ENCODE measurements at regions of chrX and their contacts with region 1.

Region 1: GRCh38 chrX:119158226-119158625 is 30.6 kb upstream of the KIAA1210 start:
- DNase-seq: no peak
- H3K4me3 ChIP-seq: no peak overlapping the region
- H3K27ac ChIP-seq: no peak overlapping the region
- H3K4me1 ChIP-seq: no peaks in the 10 kb centered on the region
- H3K27me3 ChIP-seq: no peaks in the 10 kb centered on the region
- CTCF ChIP-seq: no peak

Region 2: GRCh38 chrX:119181491-119181890 is 23.3 kb after region 1 on chrX:
- intact Hi-C with region 1: loop called (anchors 2 kb)
- DNase-seq: no peak
- H3K4me3 ChIP-seq: no peak overlapping the region
- H3K27ac ChIP-seq: no peak overlapping the region
- H3K4me1 ChIP-seq: no peaks in the 10 kb centered on the region
- H3K27me3 ChIP-seq: no peaks in the 10 kb centered on the region
- CTCF ChIP-seq: no peak

Region 3: GRCh38 chrX:119589810-119590209 is 431.6 kb after region 1 on chrX:
- intact Hi-C with region 1: no loop called
- DNase-seq: no peak
- H3K4me3 ChIP-seq: no peak overlapping the region
- H3K27ac ChIP-seq: no peak overlapping the region
- H3K4me1 ChIP-seq: no peaks in the 10 kb centered on the region
- H3K27me3 ChIP-seq: no peaks in the 10 kb centered on the region
- CTCF ChIP-seq: no peak